K562 (cell line): ENCODE measurements at regions of chr4 and their contacts with region 1.

Region 1: GRCh38 chr4:1351854-1352633 is 5.0 kb downstream of the UVSSA start:
- DNase-seq: peak; percentile 78 to 82 (median 80)
- ATAC-seq: peak; percentile 63
- H3K4me3 ChIP-seq: no peak overlapping the region
- H3K27ac ChIP-seq: no peak overlapping the region
- H3K4me1 ChIP-seq: peaks cover 7 to 71% of the 10 kb centered on the region in 2 experiments
- H3K27me3 ChIP-seq: no peaks in the 10 kb centered on the region
- CTCF ChIP-seq: peak; percentile 84 to 91 (median 90)
- EP300 ChIP-seq: no peak
- POLR2A ChIP-seq: no peak
- RAD21 ChIP-seq: peak; percentile 68 to 81

Region 2: DNA sequence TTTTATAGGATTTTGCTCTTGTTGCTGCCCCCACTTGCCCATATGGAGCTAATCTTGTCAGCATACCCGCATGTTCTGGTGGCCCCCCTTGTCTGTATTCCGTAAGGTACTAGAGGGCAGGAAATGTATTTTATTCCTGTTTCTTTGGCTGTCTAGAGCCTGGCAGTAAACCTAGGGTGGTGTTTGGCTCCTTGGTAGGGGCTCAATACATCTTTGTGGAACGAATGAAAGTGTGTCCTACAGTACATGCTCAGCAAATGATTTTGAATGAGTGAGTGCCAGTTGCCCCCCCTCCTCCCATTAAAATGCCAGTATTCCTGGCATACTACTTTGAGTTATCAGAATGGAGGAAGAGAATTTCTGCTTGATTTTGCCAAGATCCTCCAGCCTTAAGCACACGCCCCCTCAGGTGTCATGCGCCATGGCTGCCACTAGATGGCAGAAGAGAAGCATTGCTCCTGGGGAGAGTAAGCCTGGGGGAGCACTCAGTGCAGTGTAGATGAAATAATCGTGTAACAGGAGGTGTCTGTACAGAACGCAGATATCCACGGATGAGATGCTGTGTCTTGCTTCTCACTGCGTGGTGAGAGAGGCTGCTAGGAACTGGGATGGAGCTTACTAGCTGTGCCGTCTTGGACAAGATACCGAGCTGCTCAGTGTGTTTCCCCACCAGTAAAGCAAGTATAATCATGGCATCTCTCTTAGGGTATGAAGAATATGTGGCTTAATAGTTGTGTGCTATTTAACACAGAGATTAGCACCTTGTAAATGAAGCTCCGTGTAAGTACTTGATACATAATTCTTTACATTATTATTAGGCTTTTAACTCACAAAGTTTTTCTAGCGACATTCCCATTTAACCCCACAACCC is 221.5 kb before region 1 on chr4:
- CTCF ChIA-PET with region 1: interaction called, 11 read pairs
- POLR2A ChIA-PET with region 1: no interaction called
- in situ Hi-C with region 1: loop called (anchors 5 kb)
- intact Hi-C with region 1: loop called (anchors 1 kb)
- DNase-seq: peak; percentile 83 to 88 (median 86)
- ATAC-seq: peak; percentile 100
- H3K4me3 ChIP-seq: no peak overlapping the region
- H3K27ac ChIP-seq: no peak overlapping the region
- H3K4me1 ChIP-seq: no peaks in the 10 kb centered on the region; a peak in 1 of 5 replicates
- H3K27me3 ChIP-seq: peaks cover 16 to 25% of the 10 kb centered on the region in 2 experiments; a peak in 4 of 5 replicates
- CTCF ChIP-seq: peak; percentile 95 to 99 (median 98)
- EP300 ChIP-seq: no peak
- POLR2A ChIP-seq: no peak
- RAD21 ChIP-seq: peak; percentile 89 to 96

Region 3: GRCh38 chr4:1218634-1219565 is 133.1 kb before region 1 on chr4:
- CTCF ChIA-PET with region 1: no interaction called
- POLR2A ChIA-PET with region 1: no interaction called
- in situ Hi-C with region 1: no loop called
- intact Hi-C with region 1: no loop called
- DNase-seq: no peak
- ATAC-seq: no peak
- H3K4me3 ChIP-seq: no peak overlapping the region
- H3K27ac ChIP-seq: no peak overlapping the region
- H3K4me1 ChIP-seq: peaks cover 0 to 18% of the 10 kb centered on the region in 2 experiments; a peak in 1 of 5 replicates
- H3K27me3 ChIP-seq: no peaks in the 10 kb centered on the region
- CTCF ChIP-seq: no peak
- EP300 ChIP-seq: no peak
- POLR2A ChIP-seq: no peak
- RAD21 ChIP-seq: no peak

Region 4: GRCh38 chr4:1338752-1339414 is 13.2 kb before region 1 on chr4:
- CTCF ChIA-PET with region 1: no interaction called
- POLR2A ChIA-PET with region 1: no interaction called
- in situ Hi-C with region 1: no loop called
- intact Hi-C with region 1: no loop called
- DNase-seq: no peak
- ATAC-seq: no peak
- H3K4me3 ChIP-seq: no peak overlapping the region
- H3K27ac ChIP-seq: no peak overlapping the region
- H3K4me1 ChIP-seq: peaks cover 0 to 4% of the 10 kb centered on the region in 2 experiments; a peak in 1 of 5 replicates
- H3K27me3 ChIP-seq: no peaks in the 10 kb centered on the region
- CTCF ChIP-seq: no peak
- EP300 ChIP-seq: no peak
- POLR2A ChIP-seq: no peak
- RAD21 ChIP-seq: no peak

Region 5: GRCh38 chr4:1471443-1472147 is 119.6 kb after region 1 on chr4:
- CTCF ChIA-PET with region 1: no interaction called
- POLR2A ChIA-PET with region 1: no interaction called
- in situ Hi-C with region 1: no loop called
- intact Hi-C with region 1: no loop called
- DNase-seq: no peak
- ATAC-seq: no peak; the same call in 2 of the 3 replicates
- H3K4me3 ChIP-seq: no peak overlapping the region
- H3K27ac ChIP-seq: no peak overlapping the region
- H3K4me1 ChIP-seq: peaks cover 0 to 15% of the 10 kb centered on the region in 2 experiments; a peak in 2 of 5 replicates
- H3K27me3 ChIP-seq: peaks cover 0 to 11% of the 10 kb centered on the region in 2 experiments; a peak in 2 of 5 replicates
- CTCF ChIP-seq: no peak
- EP300 ChIP-seq: no peak
- POLR2A ChIP-seq: no peak
- RAD21 ChIP-seq: no peak

Region 6: DNA sequence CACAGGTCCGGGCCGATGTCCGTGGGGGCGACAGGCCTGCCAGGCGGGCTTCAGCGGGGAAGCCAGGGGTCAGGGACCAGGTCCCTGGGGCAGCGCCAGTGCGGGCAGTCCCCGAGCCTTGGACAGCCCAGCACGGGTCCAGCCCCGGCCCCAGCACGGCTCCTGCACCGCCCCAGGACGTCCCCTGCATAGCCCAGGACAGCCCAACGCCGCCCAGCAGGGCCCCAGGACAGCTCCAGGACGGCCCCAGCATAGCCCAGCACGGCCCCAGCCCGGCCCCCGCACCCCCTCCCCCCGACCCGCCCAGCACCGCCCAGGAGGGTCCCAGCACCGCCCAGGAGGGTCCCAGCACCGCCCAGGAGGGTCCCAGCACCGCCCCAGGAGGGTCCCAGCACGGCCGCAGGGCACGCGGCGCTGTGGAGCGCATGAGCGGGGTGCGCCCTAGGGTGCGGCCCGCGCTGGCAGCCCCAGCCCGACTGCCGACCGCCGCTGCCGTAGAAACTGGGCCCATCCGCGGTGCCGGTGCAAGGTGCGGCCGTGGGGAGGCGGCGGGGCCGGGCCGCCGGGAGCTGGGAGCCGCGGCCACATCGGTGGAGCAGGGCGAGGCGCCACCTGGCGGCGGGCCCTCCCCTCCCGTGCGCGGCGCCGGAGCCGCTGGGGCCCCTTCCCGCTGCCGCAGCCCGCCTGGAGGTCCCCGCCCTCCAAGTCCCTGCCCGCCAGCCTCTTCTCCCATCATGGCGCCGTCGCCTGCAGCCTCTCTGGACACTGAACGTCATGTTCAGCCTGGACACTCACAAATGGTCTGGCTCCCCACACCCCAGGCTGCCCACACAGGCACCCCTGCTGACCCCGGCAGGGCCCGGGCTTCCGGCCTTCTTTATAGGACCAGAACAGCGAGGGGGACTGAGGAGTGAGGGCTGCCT is 161.0 kb after region 1 on chr4:
- CTCF ChIA-PET with region 1: interaction called, 4 read pairs
- POLR2A ChIA-PET with region 1: interaction called, 4 read pairs
- in situ Hi-C with region 1: no loop called
- intact Hi-C with region 1: loop called (anchors 5 kb)
- DNase-seq: peak; percentile 57 to 84 (median 75)
- ATAC-seq: peak; percentile 88
- H3K4me3 ChIP-seq: no peak overlapping the region
- H3K27ac ChIP-seq: no peak overlapping the region
- H3K4me1 ChIP-seq: peaks cover 0 to 34% of the 10 kb centered on the region in 2 experiments; a peak in 2 of 5 replicates
- H3K27me3 ChIP-seq: peaks cover 21 to 45% of the 10 kb centered on the region in 2 experiments; a peak in 4 of 5 replicates
- CTCF ChIP-seq: peak; percentile 50 to 88 (median 60); a peak in 5 of 6 replicates
- EP300 ChIP-seq: no peak
- POLR2A ChIP-seq: no peak
- RAD21 ChIP-seq: peak in 1 of 2 experiments; percentile 68; a peak in 3 of 4 replicates

Region 7: GRCh38 chr4:1628892-1629698 is 277.1 kb after region 1 on chr4:
- CTCF ChIA-PET with region 1: interaction called, 7 read pairs
- POLR2A ChIA-PET with region 1: no interaction called
- in situ Hi-C with region 1: loop called (anchors 5 kb)
- intact Hi-C with region 1: loop called (anchors 2 kb)
- DNase-seq: peak; percentile 72 to 88 (median 83)
- ATAC-seq: peak; percentile 96
- H3K4me3 ChIP-seq: no peak overlapping the region
- H3K27ac ChIP-seq: no peak overlapping the region
- H3K4me1 ChIP-seq: peaks cover 12 to 36% of the 10 kb centered on the region in 2 experiments; a peak in 4 of 5 replicates
- H3K27me3 ChIP-seq: peaks cover 0 to 5% of the 10 kb centered on the region in 2 experiments; a peak in 1 of 5 replicates
- CTCF ChIP-seq: peak; percentile 88 to 94 (median 91)
- EP300 ChIP-seq: no peak
- POLR2A ChIP-seq: no peak
- RAD21 ChIP-seq: peak; percentile 73 to 87

Region 8: DNA sequence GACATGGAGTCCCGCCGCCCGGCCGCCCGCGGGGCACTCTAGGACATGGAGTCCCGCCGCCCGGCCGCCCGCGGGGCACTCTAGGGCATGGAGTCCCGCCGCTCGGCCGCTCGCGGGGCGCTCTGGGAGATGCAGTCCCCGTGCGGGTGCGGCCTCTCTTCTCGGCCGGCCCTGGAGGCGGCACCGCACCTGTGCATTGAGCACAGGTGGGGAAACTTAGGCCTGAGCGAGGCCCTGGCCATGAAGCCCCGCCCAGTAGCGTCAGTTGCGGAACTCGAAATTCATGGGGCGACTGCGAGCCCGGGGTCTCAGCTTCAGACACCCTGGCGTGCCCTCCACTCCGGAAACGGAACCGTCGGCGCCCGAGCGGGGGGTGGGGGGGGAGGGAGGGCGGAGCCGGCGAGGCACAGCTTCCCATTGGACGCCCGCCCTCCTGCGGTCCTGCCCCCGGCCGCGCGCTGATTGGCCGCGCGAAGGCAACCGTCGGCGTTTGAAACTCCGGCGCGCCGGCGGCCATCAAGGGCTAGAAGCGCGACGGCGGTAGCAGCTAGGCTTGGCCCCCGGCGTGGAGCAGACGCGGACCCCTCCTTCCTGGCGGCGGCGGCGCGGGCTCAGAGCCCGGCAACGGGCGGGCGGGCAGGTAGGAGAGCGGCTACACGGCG is 369.1 kb after region 1 on chr4 and contains the starts of genes TACC3 and TMEM129:
- CTCF ChIA-PET with region 1: interaction called, 4 read pairs
- POLR2A ChIA-PET with region 1: interaction called, 3 read pairs
- in situ Hi-C with region 1: no loop called
- intact Hi-C with region 1: loop called (anchors 10 kb)
- DNase-seq: peak; percentile 96 to 99 (median 96)
- ATAC-seq: peak; percentile 87
- H3K4me3 ChIP-seq: peak within 1 kb of the TSS; percentile 98
- H3K27ac ChIP-seq: peak within 1 kb of the TSS; percentile 97
- H3K4me1 ChIP-seq: peaks cover 10 to 69% of the 10 kb centered on the region in 2 experiments; a peak in 4 of 5 replicates
- H3K27me3 ChIP-seq: no peaks in the 10 kb centered on the region
- CTCF ChIP-seq: no peak
- EP300 ChIP-seq: no peak
- POLR2A ChIP-seq: peak; percentile 64
- RAD21 ChIP-seq: no peak
- polyA plus RNA-seq, gene TACC3: 1.9 to 2.8 TPM
- polyA plus RNA-seq, gene TMEM129: 0.34 to 0.53 TPM